Transverse colon (tissue), 4 donors: ENCODE measurements at regions of chr12 and their contacts with region 1.

Region 1: GRCh38 chr12:12606781-12607589 is 4.7 kb upstream of the CREBL2 start:
- DNase-seq: no peak
- H3K4me3 ChIP-seq: no peak overlapping the region
- H3K27ac ChIP-seq: peak overlapping the region in 1 of 4 donors; percentile 40
- H3K4me1 ChIP-seq: peaks cover 0 to 9% (median 2%) of the 10 kb centered on the region in 4 donors
- H3K27me3 ChIP-seq: no peaks in the 10 kb centered on the region
- CTCF ChIP-seq: no peak
- EP300 ChIP-seq: no peak
- POLR2A ChIP-seq: no peak

Region 2: GRCh38 chr12:12582895-12583303 is 24.1 kb before region 1 on chr12:
- in situ Hi-C with region 1: no loop called
- intact Hi-C with region 1: loop called (anchors 1 kb)
- DNase-seq: no peak
- H3K4me3 ChIP-seq: no peak overlapping the region
- H3K27ac ChIP-seq: peak overlapping the region; percentile 34 to 57 (median 46)
- H3K4me1 ChIP-seq: peaks cover 0 to 60% (median 13%) of the 10 kb centered on the region in 4 donors
- H3K27me3 ChIP-seq: no peaks in the 10 kb centered on the region
- CTCF ChIP-seq: no peak
- EP300 ChIP-seq: no peak
- POLR2A ChIP-seq: no peak